ENCODE measurements at regions of chr2 and their contacts with region 1.

Region 1: GRCh38 chr2:154608438-154608837 is 90.1 kb upstream of the KCNJ3 start:
- DNase-seq: no peak
- H3K4me3 ChIP-seq: no peak overlapping the region
- H3K27ac ChIP-seq: no peak overlapping the region
- H3K4me1 ChIP-seq: no peaks in the 10 kb centered on the region
- H3K27me3 ChIP-seq: no peaks in the 10 kb centered on the region
- CTCF ChIP-seq: no peak
- POLR2A ChIP-seq: no peak

Region 2: GRCh38 chr2:154092571-154092970 is 515.9 kb before region 1 on chr2:
- CTCF ChIA-PET with region 1: no interaction called
- POLR2A ChIA-PET with region 1: no interaction called
- dilution Hi-C with region 1: no loop called
- intact Hi-C with region 1: no loop called
- DNase-seq: no peak
- H3K4me3 ChIP-seq: no peak overlapping the region
- H3K27ac ChIP-seq: no peak overlapping the region
- H3K4me1 ChIP-seq: no peaks in the 10 kb centered on the region
- H3K27me3 ChIP-seq: no peaks in the 10 kb centered on the region
- CTCF ChIP-seq: no peak
- POLR2A ChIP-seq: no peak

Region 3: DNA sequence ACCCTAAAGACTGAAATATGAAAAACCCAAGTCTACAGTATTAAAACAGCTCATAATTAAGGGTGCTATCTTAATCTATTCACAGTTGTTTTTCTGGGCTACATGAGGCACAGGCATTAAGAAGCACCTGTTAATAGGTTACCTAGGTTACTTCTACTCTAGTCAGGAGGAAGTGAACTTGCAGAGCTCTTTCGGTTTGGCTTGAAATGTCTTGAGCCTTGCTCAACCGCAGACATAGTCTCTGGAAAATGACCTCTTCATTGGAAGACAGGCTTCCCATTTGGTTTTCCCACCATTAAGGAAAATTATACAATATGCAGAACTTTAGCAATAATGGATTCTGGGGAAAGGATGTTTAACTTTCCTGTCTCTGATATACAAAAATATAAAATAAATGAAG is 52.3 kb before region 1 on chr2:
- CTCF ChIA-PET with region 1: no interaction called
- POLR2A ChIA-PET with region 1: no interaction called
- dilution Hi-C with region 1: no loop called
- intact Hi-C with region 1: no loop called
- DNase-seq: no peak
- H3K4me3 ChIP-seq: no peak overlapping the region
- H3K27ac ChIP-seq: no peak overlapping the region
- H3K4me1 ChIP-seq: no peaks in the 10 kb centered on the region
- H3K27me3 ChIP-seq: no peaks in the 10 kb centered on the region
- CTCF ChIP-seq: no peak
- POLR2A ChIP-seq: no peak

Region 4: GRCh38 chr2:154673694-154674093 is 65.3 kb after region 1 on chr2:
- CTCF ChIA-PET with region 1: no interaction called
- POLR2A ChIA-PET with region 1: interaction called, 13 read pairs
- dilution Hi-C with region 1: no loop called
- intact Hi-C with region 1: no loop called
- DNase-seq: no peak
- H3K4me3 ChIP-seq: no peak overlapping the region
- H3K27ac ChIP-seq: no peak overlapping the region
- H3K4me1 ChIP-seq: no peaks in the 10 kb centered on the region
- H3K27me3 ChIP-seq: no peaks in the 10 kb centered on the region
- CTCF ChIP-seq: no peak
- POLR2A ChIP-seq: no peak

Region 5: GRCh38 chr2:154697418-154698252 is 89.2 kb after region 1 on chr2:
- CTCF ChIA-PET with region 1: no interaction called
- POLR2A ChIA-PET with region 1: no interaction called
- dilution Hi-C with region 1: no loop called
- intact Hi-C with region 1: no loop called
- DNase-seq: no peak
- H3K4me3 ChIP-seq: peak overlapping the region in 1 of 3 experiments; percentile 13
- H3K27ac ChIP-seq: no peak overlapping the region
- H3K4me1 ChIP-seq: no peaks in the 10 kb centered on the region
- H3K27me3 ChIP-seq: peaks cover 15 to 22% of the 10 kb centered on the region in 2 experiments
- CTCF ChIP-seq: no peak
- POLR2A ChIP-seq: no peak

Measured in endothelial cell of umbilical vein (primary cell).